ENCODE measurements at regions of chr21 and their contacts with region 1.

Region 1: GRCh38 chr21:42145569-42146272 is 73.2 kb upstream of the ABCG1 start:
- DNase-seq: peak; percentile 79
- ATAC-seq: peak; percentile 68
- H3K4me3 Mint-ChIP-seq: no peak overlapping the region
- H3K27ac Mint-ChIP-seq: peak overlapping the region; percentile 39
- H3K4me1 Mint-ChIP-seq: peaks cover 11% of the 10 kb centered on the region
- H3K27me3 Mint-ChIP-seq: no peaks in the 10 kb centered on the region

Region 2: DNA sequence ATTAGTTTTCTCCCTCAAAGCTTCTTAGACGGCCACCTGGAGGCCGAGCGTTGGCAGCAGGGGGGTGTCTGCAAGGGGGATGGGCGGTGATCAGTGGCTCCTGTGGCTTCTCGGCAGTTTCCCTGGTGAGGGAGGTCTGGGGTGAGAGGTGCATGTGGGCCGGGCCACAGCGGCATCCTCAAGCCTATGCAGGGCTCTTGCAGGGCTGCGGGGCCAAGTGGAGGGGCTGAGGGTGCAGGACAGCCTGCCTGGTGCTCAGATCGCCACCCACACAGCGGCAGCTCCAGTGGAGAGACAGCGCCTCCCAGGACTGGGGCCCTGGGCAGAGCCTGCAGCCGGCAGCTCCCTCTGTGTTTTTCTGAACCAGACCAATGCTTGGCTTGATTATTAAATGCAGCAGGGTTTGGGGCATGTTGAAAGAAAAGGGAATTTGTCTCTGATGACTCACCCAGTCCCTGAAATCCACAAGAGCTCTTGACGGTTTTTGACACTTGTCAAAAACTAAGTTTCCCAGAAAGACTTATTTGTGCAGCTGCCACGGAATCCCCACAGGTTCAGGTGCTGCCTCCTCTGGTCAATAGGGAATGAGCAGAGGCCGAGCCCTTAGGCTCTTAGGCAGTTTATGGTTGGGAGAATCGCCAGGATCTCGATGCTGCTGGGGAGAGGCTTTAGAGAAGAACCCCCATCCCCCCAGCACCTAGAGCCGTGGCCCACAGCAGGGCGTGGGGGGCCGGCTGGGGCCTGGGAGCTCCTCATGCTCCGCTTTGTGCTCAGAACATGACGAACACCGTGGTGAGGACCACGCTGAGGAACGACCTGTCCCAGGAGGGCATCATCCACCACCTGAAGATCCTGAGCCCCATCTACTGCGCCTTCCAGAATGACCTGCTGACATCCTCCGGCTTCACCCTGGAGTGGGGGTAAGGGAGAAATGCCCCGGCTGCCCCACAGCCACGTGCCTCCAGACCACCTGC is 19.9 kb before region 1 on chr21:
- CTCF ChIA-PET with region 1: interaction called, 11 read pairs
- DNase-seq: no peak
- ATAC-seq: peak; percentile 35
- H3K4me3 Mint-ChIP-seq: no peak overlapping the region
- H3K27ac Mint-ChIP-seq: no peak overlapping the region
- H3K4me1 Mint-ChIP-seq: peaks cover 36% of the 10 kb centered on the region
- H3K27me3 Mint-ChIP-seq: peaks cover 31% of the 10 kb centered on the region

Region 3: DNA sequence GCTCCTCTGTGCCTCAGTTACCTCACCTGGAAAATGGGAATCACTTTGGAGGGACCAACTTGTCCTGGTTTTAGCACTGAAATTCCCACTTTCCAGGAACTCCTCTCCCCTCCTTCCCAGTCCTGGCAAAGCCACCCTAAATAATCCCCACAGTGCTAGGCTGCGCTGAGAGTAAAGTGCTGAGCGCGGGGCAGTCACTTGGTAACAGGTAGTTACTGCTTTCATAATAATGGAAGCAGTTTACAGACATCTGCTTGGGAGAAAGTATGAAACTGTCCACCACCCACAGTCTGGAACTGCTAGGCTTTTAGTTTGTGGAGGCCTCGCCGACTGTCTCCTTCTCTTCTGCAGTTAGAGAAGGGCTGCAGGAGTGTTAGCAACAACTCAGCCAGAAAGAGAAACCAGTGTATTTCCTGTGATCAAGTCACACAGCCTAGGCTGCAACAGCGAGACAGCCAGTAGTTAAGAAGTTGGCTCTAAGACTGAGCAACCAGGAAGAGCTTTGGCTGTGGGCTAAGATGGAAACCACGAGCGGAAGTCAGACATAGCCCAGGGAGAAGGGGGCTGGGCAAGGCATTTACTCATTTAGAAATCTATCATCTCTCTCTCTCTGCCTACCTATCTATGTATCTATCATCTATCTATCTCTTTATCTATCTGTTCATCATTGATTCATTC is 42.4 kb after region 1 on chr21:
- CTCF ChIA-PET with region 1: interaction called, 13 read pairs
- DNase-seq: peak; percentile 95
- ATAC-seq: peak; percentile 93
- H3K4me3 Mint-ChIP-seq: peak overlapping the region; percentile 56
- H3K27ac Mint-ChIP-seq: peak overlapping the region; percentile 95
- H3K4me1 Mint-ChIP-seq: peaks cover 71% of the 10 kb centered on the region
- H3K27me3 Mint-ChIP-seq: peaks cover 18% of the 10 kb centered on the region

Region 4: GRCh38 chr21:42220138-42220701 is 74.5 kb after region 1 on chr21:
- CTCF ChIA-PET with region 1: interaction called, 14 read pairs
- DNase-seq: peak; percentile 82
- ATAC-seq: peak; percentile 80
- H3K4me3 Mint-ChIP-seq: peak overlapping the region; percentile 80
- H3K27ac Mint-ChIP-seq: peak overlapping the region; percentile 89
- H3K4me1 Mint-ChIP-seq: peaks cover 9% of the 10 kb centered on the region
- H3K27me3 Mint-ChIP-seq: no peaks in the 10 kb centered on the region

Region 5: GRCh38 chr21:42238185-42238934 is 92.6 kb after region 1 on chr21:
- CTCF ChIA-PET with region 1: interaction called, 17 read pairs
- DNase-seq: peak; percentile 74
- ATAC-seq: peak; percentile 22
- H3K4me3 Mint-ChIP-seq: peak overlapping the region; percentile 47
- H3K27ac Mint-ChIP-seq: peak overlapping the region; percentile 86
- H3K4me1 Mint-ChIP-seq: peaks cover 59% of the 10 kb centered on the region
- H3K27me3 Mint-ChIP-seq: no peaks in the 10 kb centered on the region

Region 6: DNA sequence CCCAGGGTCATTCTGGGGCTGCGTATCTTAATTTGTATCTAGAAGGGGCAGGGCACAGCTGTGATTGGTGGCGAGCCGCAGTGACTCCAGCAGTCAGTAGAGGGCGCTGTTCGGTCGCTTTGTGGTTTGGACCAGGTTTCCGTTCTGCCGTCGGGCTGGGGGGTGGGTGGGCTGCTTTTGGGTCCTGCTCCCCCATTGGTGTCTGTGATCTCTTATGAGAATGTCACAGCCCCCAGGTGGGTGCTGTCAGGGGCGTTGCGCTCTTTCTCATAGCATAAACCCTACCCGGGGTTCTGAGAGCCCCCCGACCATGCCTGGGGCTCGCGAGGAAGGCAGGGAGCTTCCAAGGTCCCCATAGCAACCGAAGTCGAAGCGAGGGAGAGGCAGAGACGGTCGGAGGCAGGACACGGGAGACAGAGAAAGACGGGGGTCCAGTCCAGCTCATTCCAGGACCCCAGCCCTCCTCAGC is 164.1 kb after region 1 on chr21:
- CTCF ChIA-PET with region 1: interaction called, 21 read pairs
- DNase-seq: peak; percentile 81
- ATAC-seq: peak; percentile 79
- H3K4me3 Mint-ChIP-seq: no peak overlapping the region
- H3K27ac Mint-ChIP-seq: no peak overlapping the region
- H3K4me1 Mint-ChIP-seq: peaks cover 18% of the 10 kb centered on the region
- H3K27me3 Mint-ChIP-seq: peaks cover 20% of the 10 kb centered on the region

Region 7: GRCh38 chr21:42449296-42449927 is 303.7 kb after region 1 on chr21:
- CTCF ChIA-PET with region 1: interaction called, 11 read pairs
- DNase-seq: no peak
- ATAC-seq: no peak
- H3K4me3 Mint-ChIP-seq: no peak overlapping the region
- H3K27ac Mint-ChIP-seq: peak overlapping the region; percentile 82
- H3K4me1 Mint-ChIP-seq: peaks cover 49% of the 10 kb centered on the region
- H3K27me3 Mint-ChIP-seq: no peaks in the 10 kb centered on the region